AG04450 (cell line): ENCODE measurements at regions of chr9 and their contacts with region 1.

Region 1: GRCh38 chr9:75039009-75039408 is 10.9 kb upstream of the CARNMT1 start:
- DNase-seq: peak; percentile 75
- H3K4me3 ChIP-seq: no peak overlapping the region
- H3K27ac ChIP-seq: peak overlapping the region; percentile 97
- H3K27me3 ChIP-seq: no peaks in the 10 kb centered on the region
- CTCF ChIP-seq: no peak

Region 2: DNA sequence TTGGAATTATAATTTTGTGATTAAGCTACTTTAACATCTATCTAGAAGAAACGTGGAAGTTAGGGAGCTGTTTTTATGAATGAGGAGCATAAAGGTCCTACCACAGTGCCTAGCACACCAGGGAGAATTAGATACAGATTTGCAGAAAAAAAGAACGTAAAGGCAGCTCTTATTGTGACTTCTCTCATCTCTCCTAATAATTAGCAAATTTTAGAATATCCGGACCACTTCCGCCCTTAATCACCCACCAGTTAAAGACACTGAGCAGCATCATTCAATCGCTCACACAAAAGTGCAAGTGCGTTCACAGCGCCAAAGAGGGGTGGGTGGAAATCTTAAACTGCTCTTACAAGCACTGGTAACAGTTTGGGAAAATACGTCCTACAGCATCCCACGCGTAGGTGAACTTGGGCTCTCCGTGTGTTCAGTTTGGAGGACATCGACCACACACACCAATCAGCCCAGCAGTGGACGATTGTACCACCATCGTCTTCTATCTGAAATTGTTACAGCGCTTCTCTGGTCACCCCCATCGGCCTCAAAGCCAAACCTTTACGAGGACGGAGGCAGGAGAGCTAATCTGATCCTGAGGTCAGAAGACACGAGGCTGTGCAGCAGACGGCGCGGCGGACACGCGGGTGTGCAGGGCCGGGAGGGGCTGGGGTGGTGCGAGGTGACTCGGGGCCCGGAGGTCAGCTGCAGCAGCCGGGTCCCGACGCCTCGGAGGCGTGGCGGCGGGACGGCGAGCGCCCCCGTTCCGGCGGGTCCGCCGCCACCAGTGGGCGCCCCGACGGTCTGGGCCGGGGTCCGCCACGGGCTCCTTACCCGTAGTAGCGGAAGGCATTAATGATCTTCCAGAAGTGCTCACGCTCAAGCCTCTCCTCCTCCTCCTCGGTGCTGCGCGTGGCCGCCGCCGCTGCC is 11.6 kb before region 1 on chr9:
- CTCF ChIA-PET with region 1: interaction called, 15 read pairs
- POLR2A ChIA-PET with region 1: interaction called, 6 read pairs
- DNase-seq: no peak
- H3K4me3 ChIP-seq: peak overlapping the region; percentile 86
- H3K27ac ChIP-seq: peak overlapping the region; percentile 47
- H3K27me3 ChIP-seq: no peaks in the 10 kb centered on the region
- CTCF ChIP-seq: no peak